Gastrocnemius medialis (tissue), 4 donors: ENCODE measurements at regions of chr4 and their contacts with region 1.

Region 1: DNA sequence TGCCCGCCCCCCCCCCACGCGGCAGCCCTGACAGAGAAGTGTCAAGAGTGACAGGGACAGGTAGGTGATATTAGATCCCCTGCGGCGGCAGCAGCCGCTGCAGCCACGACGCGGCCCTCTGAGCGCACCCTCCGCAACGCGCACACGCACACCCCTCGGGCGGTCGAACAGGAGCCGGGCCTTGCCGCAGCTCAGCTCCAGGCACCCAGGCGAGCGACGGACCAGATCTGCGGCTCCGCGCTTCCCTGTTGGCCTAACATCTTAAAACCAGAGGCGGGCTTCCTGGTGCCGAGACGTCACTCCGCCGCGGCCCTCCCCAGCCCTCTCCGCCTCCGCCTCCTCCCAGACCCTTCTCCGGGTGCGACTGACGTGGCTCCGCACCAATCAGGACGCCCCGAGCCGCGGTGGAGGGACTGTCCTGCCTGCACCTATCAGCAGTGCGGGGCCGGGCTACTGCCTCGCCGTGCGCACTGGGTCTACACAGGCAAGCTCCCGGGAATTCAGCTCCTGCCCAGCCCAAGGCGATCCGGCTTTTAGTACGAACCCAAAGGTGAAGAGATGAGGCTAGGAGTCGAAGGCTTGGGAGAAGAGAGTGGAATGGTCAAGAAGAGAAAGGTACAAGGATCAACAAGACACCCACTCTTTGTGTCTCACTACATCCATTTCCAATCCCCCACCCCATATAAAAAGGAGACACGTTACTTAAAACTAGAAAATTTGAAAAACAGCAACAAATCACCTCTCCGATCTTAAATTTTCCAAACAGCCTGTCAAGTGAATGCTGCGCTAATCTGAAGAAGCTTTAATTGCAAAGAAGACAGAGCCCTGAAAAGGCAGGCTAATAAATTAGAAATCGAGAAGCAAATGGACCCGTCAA is at the start of gene PITX2:
- DNase-seq: peak; percentile 97 to 98
- ATAC-seq: peak; percentile 68 to 71
- H3K4me3 ChIP-seq: peak within 1 kb of the TSS; percentile 74 to 82 (median 80)
- H3K27ac ChIP-seq: peak within 1 kb of the TSS; percentile 95 to 99 (median 96)
- H3K4me1 ChIP-seq: peaks cover 18 to 19% of the 10 kb centered on the region in 2 donors
- H3K27me3 ChIP-seq: no peaks in the 10 kb centered on the region
- CTCF ChIP-seq: no peak
- POLR2A ChIP-seq: peak; percentile 91 to 95
- total RNA-seq, gene PITX2: 30.5 to 58.9 (median 38.2) TPM

Region 2: GRCh38 chr4:110475881-110476835 is 146.9 kb before region 1 on chr4 and contains the start of gene ENPEP:
- in situ Hi-C with region 1: no loop called
- intact Hi-C with region 1: loop called (anchors 5 kb)
- DNase-seq: peak; percentile 27 to 70
- ATAC-seq: peak; percentile 75 to 86
- H3K4me3 ChIP-seq: peak within 1 kb of the TSS; percentile 56 to 72 (median 66)
- H3K27ac ChIP-seq: peak within 1 kb of the TSS; percentile 70 to 87 (median 77)
- H3K4me1 ChIP-seq: peaks cover 3 to 26% of the 10 kb centered on the region in 2 donors
- H3K27me3 ChIP-seq: no peaks in the 10 kb centered on the region
- CTCF ChIP-seq: no peak
- POLR2A ChIP-seq: peak; percentile 52 to 67
- total RNA-seq, gene ENPEP: 1.4 to 4.2 (median 2.1) TPM

Region 3: DNA sequence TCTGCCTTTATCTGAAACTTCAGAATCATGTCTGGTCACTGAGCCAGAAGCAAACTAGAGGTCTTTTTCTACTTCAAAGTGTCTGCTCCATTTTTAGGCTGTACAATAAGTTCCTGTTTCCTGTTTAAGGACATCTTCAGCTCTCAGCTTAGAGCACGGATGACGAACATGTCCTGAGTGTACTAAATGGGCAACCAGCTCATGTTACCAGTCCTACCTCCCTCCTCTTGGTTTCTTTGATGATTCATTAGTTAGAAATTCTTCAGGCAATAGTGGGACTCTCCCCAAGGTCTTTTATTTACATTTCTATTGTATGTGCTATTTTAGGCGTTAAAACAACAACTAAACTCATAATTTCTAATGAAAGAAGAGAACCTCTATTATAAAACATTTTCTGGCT is 89.1 kb before region 1 on chr4:
- in situ Hi-C with region 1: no loop called
- intact Hi-C with region 1: loop called (anchors 5 kb)
- DNase-seq: peak; percentile 74 to 76
- ATAC-seq: peak; percentile 100
- H3K4me3 ChIP-seq: peak overlapping the region; percentile 23 to 37 (median 30)
- H3K27ac ChIP-seq: peak overlapping the region; percentile 79 to 90 (median 86)
- H3K4me1 ChIP-seq: peaks cover 8 to 13% of the 10 kb centered on the region in 2 donors
- H3K27me3 ChIP-seq: no peaks in the 10 kb centered on the region
- CTCF ChIP-seq: no peak
- POLR2A ChIP-seq: peak; percentile 24 to 57

Region 4: DNA sequence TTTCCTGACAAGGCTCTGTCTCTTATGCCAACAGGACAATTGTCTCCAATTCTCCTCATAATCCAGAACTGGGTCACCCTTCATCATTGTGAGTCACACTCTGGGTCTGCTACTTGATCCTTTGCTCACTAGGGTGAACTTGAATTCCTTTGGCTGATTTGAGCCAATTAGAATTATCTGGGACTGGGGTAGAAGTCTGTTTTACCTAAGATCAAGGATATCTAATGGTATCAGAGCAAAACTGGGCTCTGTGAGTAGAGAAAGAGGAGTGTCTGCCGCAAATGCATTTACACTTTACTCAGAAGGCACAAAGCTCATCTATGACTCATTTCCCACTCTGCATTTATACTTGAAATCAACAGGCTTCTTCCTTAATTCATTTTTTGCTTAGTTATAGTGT is 72.8 kb before region 1 on chr4:
- in situ Hi-C with region 1: no loop called
- intact Hi-C with region 1: loop called (anchors 5 kb)
- DNase-seq: no peak
- ATAC-seq: peak; percentile 58 to 67
- H3K4me3 ChIP-seq: no peak overlapping the region
- H3K27ac ChIP-seq: peak overlapping the region; percentile 65 to 68 (median 66)
- H3K4me1 ChIP-seq: peaks cover 10 to 26% of the 10 kb centered on the region in 2 donors
- H3K27me3 ChIP-seq: no peaks in the 10 kb centered on the region
- CTCF ChIP-seq: no peak
- POLR2A ChIP-seq: no peak

Region 5: DNA sequence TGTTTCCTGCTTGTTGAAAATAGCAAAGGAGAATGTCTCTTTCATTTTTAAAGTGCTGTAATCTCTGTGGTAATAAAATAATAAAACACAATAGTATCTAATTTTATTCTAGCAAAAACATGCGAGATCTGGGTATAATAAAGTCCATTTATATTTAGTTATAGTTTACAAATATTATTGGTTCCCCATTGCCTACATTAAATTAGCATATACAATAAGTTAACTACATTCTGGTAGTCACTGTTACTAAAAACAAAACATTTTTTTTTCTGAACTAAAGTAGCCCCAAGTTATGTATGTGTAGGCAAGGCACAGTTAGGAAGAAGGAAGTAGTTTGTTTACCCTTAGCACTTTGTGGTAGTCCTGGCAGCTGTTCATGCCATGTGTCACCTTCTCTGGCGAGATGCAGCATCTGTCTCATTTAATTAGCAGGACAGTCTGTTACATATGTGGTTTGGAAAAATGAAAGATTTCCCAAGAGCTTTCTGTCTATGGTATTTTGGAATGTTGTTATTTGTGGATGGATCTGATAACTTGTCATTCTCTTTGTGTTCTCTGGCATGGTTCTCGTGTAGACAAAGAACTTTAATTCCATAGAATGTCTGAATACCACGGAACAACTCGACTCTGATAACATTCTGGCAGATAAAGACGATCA is 231.1 kb after region 1 on chr4:
- in situ Hi-C with region 1: no loop called
- intact Hi-C with region 1: loop called (anchors 5 kb)
- DNase-seq: peak in 1 of 2 donors; percentile 44
- ATAC-seq: peak in 1 of 2 donors; percentile 48
- H3K4me3 ChIP-seq: no peak overlapping the region
- H3K27ac ChIP-seq: peak overlapping the region in 2 of 4 donors; percentile 45 to 62
- H3K4me1 ChIP-seq: peaks cover 33 to 40% of the 10 kb centered on the region in 2 donors
- H3K27me3 ChIP-seq: no peaks in the 10 kb centered on the region
- CTCF ChIP-seq: no peak
- POLR2A ChIP-seq: no peak